Activated CD4-positive, alpha-beta T cell treated with anti-CD3 and anti-CD28 coated beads, Interleukin-2, amount 10 ng/mL, durations not matched to agents 7 days and 5 days (primary cell): ENCODE measurements at regions of chr9 and their contacts with region 1.

Region 1: GRCh38 chr9:128361986-128362646 is 9.1 kb upstream of the URM1 start:
- DNase-seq: peak; percentile 74
- H3K4me3 Mint-ChIP-seq: peak overlapping the region; percentile 72
- H3K27ac Mint-ChIP-seq: peak overlapping the region; percentile 78
- H3K4me1 Mint-ChIP-seq: peaks cover 28% of the 10 kb centered on the region
- H3K27me3 Mint-ChIP-seq: no peaks in the 10 kb centered on the region

Region 2: GRCh38 chr9:128339771-128340690 is 22.1 kb before region 1 on chr9 and contains the start of gene SLC27A4:
- CTCF ChIA-PET with region 1: interaction called, 29 read pairs
- POLR2A ChIA-PET with region 1: interaction called, 4 read pairs
- DNase-seq: peak; percentile 84
- H3K4me3 Mint-ChIP-seq: peak within 1 kb of the TSS; percentile 87
- H3K27ac Mint-ChIP-seq: peak within 1 kb of the TSS; percentile 91
- H3K4me1 Mint-ChIP-seq: peaks cover 15% of the 10 kb centered on the region
- H3K27me3 Mint-ChIP-seq: no peaks in the 10 kb centered on the region
- total RNA-seq, gene SLC27A4: 15.8 to 16.8 TPM

Region 3: GRCh38 chr9:128349125-128349524 is 13.0 kb before region 1 on chr9:
- CTCF ChIA-PET with region 1: interaction called, 21 read pairs
- POLR2A ChIA-PET with region 1: no interaction called
- DNase-seq: no peak
- H3K4me3 Mint-ChIP-seq: no peak overlapping the region
- H3K27ac Mint-ChIP-seq: no peak overlapping the region
- H3K4me1 Mint-ChIP-seq: no peaks in the 10 kb centered on the region
- H3K27me3 Mint-ChIP-seq: no peaks in the 10 kb centered on the region

Region 4: DNA sequence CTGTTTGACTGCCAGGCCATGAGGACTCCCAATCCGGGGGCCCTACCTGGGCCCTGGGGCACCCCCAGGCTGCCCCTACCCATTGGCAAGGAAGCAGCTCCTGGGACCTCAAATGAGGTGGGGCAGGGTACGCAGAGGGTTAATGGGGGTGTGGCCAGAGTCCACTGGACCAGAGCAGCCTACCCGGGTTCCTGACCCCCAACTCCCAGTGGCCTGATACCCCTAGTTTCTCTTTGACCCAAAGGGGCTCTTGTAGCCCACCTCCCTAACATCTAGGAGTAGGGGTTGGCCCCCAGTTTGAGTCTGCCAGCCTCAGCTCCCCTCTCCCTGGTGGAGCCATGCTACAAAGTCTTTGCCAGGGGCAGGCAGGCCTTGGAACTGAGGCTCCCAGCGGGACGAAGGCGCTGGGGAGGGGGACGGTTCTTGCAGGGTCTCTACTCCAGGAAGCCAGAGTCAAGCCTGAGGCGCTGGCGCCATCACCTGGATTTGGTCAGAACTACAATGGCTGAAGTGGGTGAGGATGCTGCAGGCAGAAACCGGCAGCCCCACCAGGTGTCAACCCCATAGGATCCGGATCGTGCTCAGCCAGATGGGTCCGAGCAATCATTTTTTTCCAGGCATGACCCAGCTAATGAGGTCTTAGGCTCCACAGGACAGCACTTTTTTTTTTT is 50.1 kb after region 1 on chr9:
- CTCF ChIA-PET with region 1: interaction called, 12 read pairs
- POLR2A ChIA-PET with region 1: no interaction called
- DNase-seq: peak; percentile 55
- H3K4me3 Mint-ChIP-seq: no peak overlapping the region
- H3K27ac Mint-ChIP-seq: no peak overlapping the region
- H3K4me1 Mint-ChIP-seq: no peaks in the 10 kb centered on the region
- H3K27me3 Mint-ChIP-seq: peaks cover 50% of the 10 kb centered on the region

Region 5: GRCh38 chr9:128552153-128552743 is 190.1 kb after region 1 on chr9 and contains the start of gene SPTAN1:
- CTCF ChIA-PET with region 1: no interaction called
- POLR2A ChIA-PET with region 1: no interaction called
- DNase-seq: peak; percentile 96
- H3K4me3 Mint-ChIP-seq: peak within 1 kb of the TSS; percentile 92
- H3K27ac Mint-ChIP-seq: peak within 1 kb of the TSS; percentile 97
- H3K4me1 Mint-ChIP-seq: peaks cover 37% of the 10 kb centered on the region
- H3K27me3 Mint-ChIP-seq: no peaks in the 10 kb centered on the region
- total RNA-seq, gene SPTAN1: 338 to 383 TPM

Region 6: GRCh38 chr9:128863647-128864046 is 501.5 kb after region 1 on chr9:
- CTCF ChIA-PET with region 1: no interaction called
- POLR2A ChIA-PET with region 1: no interaction called
- DNase-seq: peak; percentile 87
- H3K4me3 Mint-ChIP-seq: no peak overlapping the region
- H3K27ac Mint-ChIP-seq: peak overlapping the region; percentile 76
- H3K4me1 Mint-ChIP-seq: peaks cover 11% of the 10 kb centered on the region
- H3K27me3 Mint-ChIP-seq: no peaks in the 10 kb centered on the region